ENCODE measurements at regions of chr12 and their contacts with region 1.

Region 1: DNA sequence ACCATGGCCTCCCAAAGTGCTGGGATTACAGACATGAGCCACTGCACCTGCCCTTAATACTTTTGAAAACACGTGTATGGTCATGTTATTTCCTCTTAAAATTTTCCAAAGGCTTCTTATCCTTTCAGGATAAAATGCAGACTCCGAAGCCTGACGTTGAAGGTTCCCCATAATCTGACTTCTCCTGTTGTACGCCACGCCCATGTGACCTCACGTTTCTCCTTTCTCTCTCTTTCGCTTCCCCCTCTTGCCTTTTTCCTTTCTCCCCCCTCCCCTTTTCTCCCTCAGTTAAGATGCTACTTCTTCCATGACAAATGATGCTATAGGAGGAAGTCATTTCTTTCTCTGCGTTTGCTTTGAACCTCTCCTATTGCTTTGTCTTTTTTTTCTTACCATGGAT is 266.0 kb downstream of the FBXL14 start:
- DNase-seq: peak; percentile 53
- ATAC-seq: peak; percentile 53

Region 2: DNA sequence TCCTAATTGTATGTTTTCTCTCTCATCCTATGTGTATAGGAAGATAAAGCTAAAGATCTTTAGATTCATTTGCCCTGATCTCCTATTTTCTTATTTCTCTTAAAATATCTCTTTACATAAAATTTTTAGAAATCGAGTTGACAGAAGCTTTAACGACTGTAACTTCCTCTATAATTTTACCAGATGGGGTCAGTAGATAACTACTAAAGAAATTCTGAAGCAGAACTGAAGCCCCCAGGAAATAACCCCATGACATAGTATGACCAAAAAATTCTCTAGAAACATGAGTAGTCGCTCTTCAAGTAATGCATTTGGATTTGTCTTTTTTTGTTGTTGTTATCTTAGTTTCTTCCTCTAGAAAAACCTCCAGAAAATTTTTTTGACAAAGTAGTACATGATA is 49.3 kb before region 1 on chr12:
- intact Hi-C with region 1: no loop called
- DNase-seq: no peak
- ATAC-seq: no peak

Region 3: DNA sequence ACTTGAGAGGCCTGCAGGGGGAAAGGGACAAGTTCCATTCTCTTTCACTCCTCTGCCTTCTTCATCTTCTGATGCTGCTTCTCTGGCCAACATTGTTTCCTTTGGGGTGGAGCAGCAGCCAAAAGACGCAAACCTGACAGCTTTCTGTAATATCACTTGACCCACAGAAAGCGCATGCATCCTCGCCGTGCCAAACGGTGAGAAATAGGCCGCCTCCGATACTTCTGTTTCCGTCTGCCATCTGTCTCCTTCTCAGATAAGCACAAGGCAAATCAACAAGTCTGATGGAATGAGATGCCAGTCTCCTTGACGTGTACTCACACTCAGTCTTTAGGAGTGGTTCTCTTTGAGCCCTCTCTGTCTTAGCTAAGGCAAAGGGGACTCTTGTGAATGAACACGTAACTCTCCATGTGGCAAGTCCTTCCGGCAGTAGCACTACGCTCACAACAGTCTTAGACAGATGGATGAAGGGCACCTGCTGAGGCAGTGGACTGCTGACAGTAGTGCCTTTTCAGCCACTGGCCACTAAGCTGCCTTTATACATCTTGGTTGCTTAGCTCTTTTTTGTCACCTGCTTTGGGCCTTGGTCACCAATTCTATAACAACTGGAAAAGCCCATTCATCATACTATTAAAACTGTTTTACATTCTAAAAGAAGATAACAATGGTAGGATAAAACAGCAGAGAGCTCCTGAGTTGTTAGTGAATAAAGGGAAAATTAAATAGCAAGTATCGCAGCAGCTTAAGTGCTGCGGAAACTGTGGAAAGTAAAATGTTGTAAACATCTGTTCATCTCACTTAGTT is 52.0 kb after region 1 on chr12:
- intact Hi-C with region 1: loop called (anchors 10 kb)
- DNase-seq: no peak
- ATAC-seq: no peak

Region 4: GRCh38 chr12:1435456-1435855 is 107.1 kb after region 1 on chr12:
- intact Hi-C with region 1: no loop called
- DNase-seq: no peak
- ATAC-seq: no peak